ENCODE measurements at regions of chr10 and their contacts with region 1.

Region 1: DNA sequence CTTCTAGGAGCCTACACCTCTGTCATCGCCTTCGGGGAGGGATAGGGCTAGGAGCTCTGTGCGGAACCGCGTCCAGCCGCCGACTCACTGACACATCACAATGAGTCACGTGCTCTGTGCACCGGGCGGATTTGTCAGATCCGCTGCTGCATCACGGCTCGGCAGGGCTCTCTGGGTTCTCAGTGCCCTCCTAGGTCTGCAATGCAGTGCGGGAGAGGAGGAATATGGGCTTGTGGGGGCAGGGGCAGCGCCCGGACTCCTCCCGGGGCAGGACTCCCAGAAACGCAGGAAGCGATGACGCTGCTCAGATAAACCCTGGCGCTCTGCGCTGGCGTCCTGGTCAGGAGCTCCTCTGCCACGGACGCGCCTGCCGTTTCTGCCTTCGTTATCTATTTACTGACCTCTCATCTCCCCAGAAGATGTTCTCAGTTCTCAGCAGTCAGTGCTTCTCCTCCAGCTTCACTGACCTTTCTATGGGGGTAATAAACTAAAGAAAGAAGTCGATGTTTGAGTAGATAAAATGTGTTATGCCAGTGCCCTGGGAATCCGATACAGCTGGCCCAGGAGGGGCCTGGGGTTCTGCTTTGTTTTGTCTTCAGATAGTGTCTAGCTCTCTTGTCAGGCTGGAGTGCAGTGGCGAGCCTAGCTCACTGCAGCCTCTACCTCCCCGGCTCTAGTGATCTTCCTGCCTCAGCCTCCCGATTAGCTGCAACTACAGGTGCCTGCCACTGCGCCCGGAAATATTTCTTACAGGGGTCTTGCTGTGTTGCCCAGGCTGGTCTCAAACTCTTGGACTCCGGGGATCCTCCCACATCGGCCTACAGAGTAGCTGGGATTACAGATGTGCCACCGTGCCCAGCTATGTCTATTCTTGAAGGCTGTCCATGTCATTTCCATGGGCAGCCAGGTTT is 22.8 kb upstream of the ITGB1 start:
- DNase-seq: peak; percentile 97
- H3K4me3 ChIP-seq: peak overlapping the region; percentile 45
- CTCF ChIP-seq: no peak

Region 2: GRCh38 chr10:32856387-32856786 is 124.4 kb before region 1 on chr10:
- CTCF ChIA-PET with region 1: no interaction called
- POLR2A ChIA-PET with region 1: no interaction called
- DNase-seq: no peak
- H3K4me3 ChIP-seq: no peak overlapping the region
- CTCF ChIP-seq: no peak

Region 3: GRCh38 chr10:32958085-32959005 is 22.5 kb before region 1 on chr10 and contains the start of gene ITGB1:
- CTCF ChIA-PET with region 1: interaction called, 3 read pairs
- POLR2A ChIA-PET with region 1: interaction called, 45 read pairs
- DNase-seq: peak; percentile 68
- H3K4me3 ChIP-seq: peak within 1 kb of the TSS; percentile 75
- CTCF ChIP-seq: no peak

Region 4: DNA sequence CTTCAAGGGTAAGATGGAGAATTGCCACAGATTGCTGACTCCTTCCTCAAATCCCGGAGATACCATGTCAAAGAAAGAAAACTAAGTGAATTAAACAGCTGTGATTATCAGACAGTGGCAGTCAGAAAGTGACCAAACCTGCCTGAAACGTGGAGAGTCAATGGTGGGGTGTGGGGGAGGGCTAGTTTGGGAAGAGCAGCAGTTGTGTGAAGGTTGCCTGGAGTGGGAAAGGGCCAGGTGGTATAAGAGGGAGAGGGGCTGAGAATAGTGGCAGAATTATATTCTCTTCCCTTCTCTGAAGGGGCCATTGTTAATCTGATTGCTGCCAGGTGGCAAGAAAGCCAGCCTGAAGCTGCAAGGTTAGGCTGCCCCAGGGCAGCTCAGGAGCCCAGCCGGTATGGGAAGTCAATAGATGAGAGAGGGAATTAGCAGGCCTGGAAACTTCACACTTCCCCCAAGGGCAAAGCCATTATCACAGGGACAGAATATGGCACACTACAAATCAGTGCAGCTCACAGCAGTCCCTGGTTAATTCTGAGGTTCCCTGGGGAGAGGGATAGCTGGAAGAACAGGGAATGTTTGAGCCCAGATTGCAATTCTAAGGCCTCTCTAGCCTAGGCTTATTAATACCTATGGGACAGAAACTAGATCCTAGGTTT is 61.1 kb after region 1 on chr10:
- CTCF ChIA-PET with region 1: no interaction called
- POLR2A ChIA-PET with region 1: no interaction called
- DNase-seq: no peak
- H3K4me3 ChIP-seq: no peak overlapping the region
- CTCF ChIP-seq: no peak

Measured in AG04449 (cell line).